Activated naive CD4-positive, alpha-beta T cell treated with anti-CD3 and anti-CD28 coated beads for 36 hours (primary cell): ENCODE measurements at regions of chr1 and their contacts with region 1.

Region 1: GRCh38 chr1:174726167-174726879 is 273.4 kb upstream of the CACYBP start:
- DNase-seq: no peak
- H3K4me3 Mint-ChIP-seq: no peak overlapping the region
- H3K27ac Mint-ChIP-seq: no peak overlapping the region
- H3K4me1 Mint-ChIP-seq: no peaks in the 10 kb centered on the region
- H3K27me3 Mint-ChIP-seq: no peaks in the 10 kb centered on the region

Region 2: DNA sequence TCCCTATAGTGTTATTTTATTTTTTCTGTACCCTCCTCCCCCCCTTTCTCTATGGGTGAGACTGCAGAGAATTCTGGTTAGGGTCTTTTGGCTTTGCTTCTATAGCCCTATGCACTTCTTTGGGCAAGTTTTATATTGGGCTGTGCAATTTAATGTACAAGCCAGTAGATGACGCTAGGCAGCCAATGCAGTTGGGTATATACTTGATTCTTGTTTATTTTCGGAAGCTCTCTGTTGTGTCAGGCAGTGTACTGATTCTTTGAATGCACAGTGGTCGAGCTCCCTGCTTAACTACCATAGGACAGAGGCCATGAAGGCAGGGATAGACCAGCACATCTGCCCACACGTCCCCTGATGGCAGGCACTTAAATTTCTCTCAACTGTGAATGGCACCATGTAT is 312.7 kb before region 1 on chr1:
- CTCF ChIA-PET with region 1: interaction called, 3 read pairs
- intact Hi-C with region 1: loop called (anchors 5 kb)
- DNase-seq: no peak
- H3K4me3 Mint-ChIP-seq: no peak overlapping the region
- H3K27ac Mint-ChIP-seq: no peak overlapping the region
- H3K4me1 Mint-ChIP-seq: peaks cover 16% of the 10 kb centered on the region
- H3K27me3 Mint-ChIP-seq: no peaks in the 10 kb centered on the region

Region 3: GRCh38 chr1:174775614-174776013 is 49.3 kb after region 1 on chr1:
- CTCF ChIA-PET with region 1: no interaction called
- intact Hi-C with region 1: no loop called
- DNase-seq: no peak
- H3K4me3 Mint-ChIP-seq: no peak overlapping the region
- H3K27ac Mint-ChIP-seq: no peak overlapping the region
- H3K4me1 Mint-ChIP-seq: peaks cover 3% of the 10 kb centered on the region
- H3K27me3 Mint-ChIP-seq: no peaks in the 10 kb centered on the region